ENCODE measurements at regions of chr21 and their contacts with region 1.

Region 1: GRCh38 chr21:39705849-39706248 is 39.1 kb upstream of the IGSF5 start:
- DNase-seq: no peak
- H3K4me3 ChIP-seq: no peak overlapping the region
- H3K27ac ChIP-seq: no peak overlapping the region
- H3K4me1 ChIP-seq: no peaks in the 10 kb centered on the region
- H3K27me3 ChIP-seq: no peaks in the 10 kb centered on the region
- CTCF ChIP-seq: peak in 1 of 4 experiments; percentile 16
- EP300 ChIP-seq: no peak
- POLR2A ChIP-seq: no peak

Region 2: DNA sequence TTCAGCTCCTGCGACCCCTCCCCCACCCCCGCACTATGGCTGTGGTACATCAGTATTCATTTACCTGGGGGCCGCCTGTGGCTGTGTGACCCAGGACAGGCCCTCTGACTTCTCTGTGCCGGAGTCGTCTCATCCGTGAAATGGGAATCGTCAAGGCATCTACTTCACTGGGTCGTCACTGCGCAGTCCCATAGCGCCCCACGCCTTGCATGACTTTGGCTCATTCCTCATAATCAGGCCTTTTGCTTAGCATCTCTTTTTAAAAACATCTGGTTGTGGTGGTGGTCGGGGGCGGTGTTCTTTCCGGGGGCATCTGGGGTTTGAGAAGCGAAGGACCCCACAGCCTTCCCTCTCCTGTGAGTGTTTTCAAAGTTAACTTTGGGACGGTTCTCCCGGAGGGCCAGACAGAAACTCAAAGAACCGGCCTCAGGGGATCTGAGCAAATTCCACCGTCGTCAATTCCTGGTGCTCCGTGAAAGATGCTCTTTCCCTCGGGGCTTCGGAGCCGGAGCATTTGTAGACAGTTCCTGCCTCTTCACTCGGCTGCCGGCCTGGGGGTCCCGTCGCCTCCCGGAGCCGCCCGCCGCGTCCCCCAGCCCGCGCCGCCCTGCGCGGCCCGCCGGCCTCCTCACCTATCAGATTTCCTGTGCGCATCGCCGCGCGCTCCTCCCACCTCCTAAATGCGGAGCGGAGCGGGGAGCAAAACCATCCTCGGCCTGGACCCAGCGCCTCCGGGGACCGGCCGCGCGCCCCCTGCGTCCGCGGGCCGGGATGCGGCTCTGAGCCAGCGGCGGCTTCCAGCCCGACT is 93.4 kb before region 1 on chr21 and contains the start of gene B3GALT5:
- intact Hi-C with region 1: loop called (anchors 10 kb)
- DNase-seq: no peak
- H3K4me3 ChIP-seq: peak within 1 kb of the TSS in 3 of 4 donors; percentile 38 to 60 (median 57)
- H3K27ac ChIP-seq: peak within 1 kb of the TSS in 2 of 4 donors; percentile 37 to 51
- H3K4me1 ChIP-seq: peaks cover 0 to 21% (median 9%) of the 10 kb centered on the region in 4 donors
- H3K27me3 ChIP-seq: peaks cover 0 to 21% (median 16%) of the 10 kb centered on the region in 3 donors
- CTCF ChIP-seq: no peak
- EP300 ChIP-seq: no peak
- POLR2A ChIP-seq: no peak
- total RNA-seq, gene B3GALT5: 0.36 to 1.4 (median 0.94) TPM

Region 3: GRCh38 chr21:39951183-39952091 is 245.6 kb after region 1 on chr21:
- intact Hi-C with region 1: no loop called
- DNase-seq: no peak
- H3K4me3 ChIP-seq: no peak overlapping the region
- H3K27ac ChIP-seq: peak overlapping the region in 2 of 4 donors; percentile 26 to 55
- H3K4me1 ChIP-seq: peaks cover 0 to 42% (median 9%) of the 10 kb centered on the region in 4 donors
- H3K27me3 ChIP-seq: no peaks in the 10 kb centered on the region
- CTCF ChIP-seq: no peak
- EP300 ChIP-seq: no peak
- POLR2A ChIP-seq: no peak

Measured in sigmoid colon (tissue), 7 donors.